Esophagus muscularis mucosa (tissue), 4 donors: ENCODE measurements at regions of chr12 and their contacts with region 1.

Region 1: GRCh38 chr12:69738351-69739286 is at the start of gene RAB3IP:
- DNase-seq: peak; percentile 93
- H3K4me3 ChIP-seq: peak within 1 kb of the TSS; percentile 86 to 98 (median 90)
- H3K27ac ChIP-seq: peak within 1 kb of the TSS; percentile 68 to 77 (median 70)
- H3K4me1 ChIP-seq: peaks cover 11 to 16% (median 13%) of the 10 kb centered on the region in 4 donors
- H3K27me3 ChIP-seq: no peaks in the 10 kb centered on the region
- CTCF ChIP-seq: peak; percentile 51 to 71 (median 56)
- EP300 ChIP-seq: no peak
- POLR2A ChIP-seq: no peak
- total RNA-seq, gene RAB3IP: 8.2 to 18.5 (median 11.2) TPM

Region 2: GRCh38 chr12:69585189-69586062 is 153.2 kb before region 1 on chr12 and contains the start of gene CCT2:
- intact Hi-C with region 1: loop called (anchors 10 kb)
- DNase-seq: peak; percentile 98
- H3K4me3 ChIP-seq: peak within 1 kb of the TSS; percentile 82 to 99 (median 92)
- H3K27ac ChIP-seq: peak within 1 kb of the TSS; percentile 85 to 93 (median 90)
- H3K4me1 ChIP-seq: peaks cover 9 to 17% (median 13%) of the 10 kb centered on the region in 4 donors
- H3K27me3 ChIP-seq: no peaks in the 10 kb centered on the region
- CTCF ChIP-seq: peak; percentile 8 to 44 (median 20)
- EP300 ChIP-seq: no peak
- POLR2A ChIP-seq: peak; percentile 71
- total RNA-seq, gene CCT2: 86.4 to 137 (median 122) TPM

Region 3: GRCh38 chr12:70032076-70032475 is 293.5 kb after region 1 on chr12:
- intact Hi-C with region 1: no loop called
- DNase-seq: no peak
- H3K4me3 ChIP-seq: no peak overlapping the region
- H3K27ac ChIP-seq: no peak overlapping the region
- H3K4me1 ChIP-seq: no peaks in the 10 kb centered on the region
- H3K27me3 ChIP-seq: no peaks in the 10 kb centered on the region
- CTCF ChIP-seq: no peak
- EP300 ChIP-seq: no peak
- POLR2A ChIP-seq: no peak